MCF 10A (cell line): ENCODE measurements at regions of chr7 and their contacts with region 1.

Region 1: GRCh38 chr7:119733127-119733879 is 539.7 kb upstream of the KCND2 start:
- DNase-seq: peak; percentile 77
- H3K4me3 Mint-ChIP-seq: no peak overlapping the region
- H3K27ac Mint-ChIP-seq: no peak overlapping the region
- H3K4me1 Mint-ChIP-seq: peaks cover 13% of the 10 kb centered on the region
- H3K27me3 Mint-ChIP-seq: no peaks in the 10 kb centered on the region
- CTCF ChIP-seq: no peak

Region 2: GRCh38 chr7:119720541-119720940 is 12.8 kb before region 1 on chr7:
- CTCF ChIA-PET with region 1: no interaction called
- POLR2A ChIA-PET with region 1: no interaction called
- intact Hi-C with region 1: loop called (anchors 1 kb)
- DNase-seq: peak; percentile 38
- H3K4me3 Mint-ChIP-seq: no peak overlapping the region
- H3K27ac Mint-ChIP-seq: no peak overlapping the region
- H3K4me1 Mint-ChIP-seq: no peaks in the 10 kb centered on the region
- H3K27me3 Mint-ChIP-seq: peaks cover 30% of the 10 kb centered on the region
- CTCF ChIP-seq: no peak

Region 3: GRCh38 chr7:119949053-119949452 is 215.8 kb after region 1 on chr7:
- CTCF ChIA-PET with region 1: no interaction called
- POLR2A ChIA-PET with region 1: no interaction called
- intact Hi-C with region 1: no loop called
- DNase-seq: no peak
- H3K4me3 Mint-ChIP-seq: no peak overlapping the region
- H3K27ac Mint-ChIP-seq: no peak overlapping the region
- H3K4me1 Mint-ChIP-seq: no peaks in the 10 kb centered on the region
- H3K27me3 Mint-ChIP-seq: peaks cover 35% of the 10 kb centered on the region
- CTCF ChIP-seq: no peak